Natural killer cell (primary cell): ENCODE measurements at regions of chr20 and their contacts with region 1.

Region 1: GRCh38 chr20:35771689-35772562 is at the start of gene PHF20:
- DNase-seq: peak; percentile 100
- ATAC-seq: peak; percentile 77 to 93 (median 80)
- H3K4me3 ChIP-seq: peak within 1 kb of the TSS; percentile 46
- H3K4me3 Mint-ChIP-seq: peak within 1 kb of the TSS; percentile 96
- H3K27ac ChIP-seq: peak within 1 kb of the TSS; percentile 99
- H3K27ac Mint-ChIP-seq: peak within 1 kb of the TSS; percentile 98 to 100
- H3K4me1 ChIP-seq: peaks cover 73% of the 10 kb centered on the region
- H3K4me1 Mint-ChIP-seq: peaks cover 65 to 70% of the 10 kb centered on the region in 2 donors
- H3K27me3 ChIP-seq: no peaks in the 10 kb centered on the region
- H3K27me3 Mint-ChIP-seq: no peaks in the 10 kb centered on the region
- CTCF ChIP-seq: no peak
- total RNA-seq, gene PHF20: 151 to 165 (median 161) TPM

Region 2: GRCh38 chr20:35664544-35665221 is 107.2 kb before region 1 on chr20 and contains the starts of genes CPNE1 and RBM12:
- intact Hi-C with region 1: loop called (anchors 1 kb)
- DNase-seq: peak; percentile 93 to 98
- ATAC-seq: peak; percentile 68 to 87 (median 80)
- H3K4me3 ChIP-seq: peak within 1 kb of the TSS; percentile 81
- H3K4me3 Mint-ChIP-seq: peak within 1 kb of the TSS; percentile 96
- H3K27ac ChIP-seq: peak within 1 kb of the TSS; percentile 97
- H3K27ac Mint-ChIP-seq: peak within 1 kb of the TSS in 1 of 2 donors; percentile 100
- H3K4me1 ChIP-seq: peaks cover 22% of the 10 kb centered on the region
- H3K4me1 Mint-ChIP-seq: peaks cover 55% of the 10 kb centered on the region in 2 donors
- H3K27me3 ChIP-seq: no peaks in the 10 kb centered on the region
- H3K27me3 Mint-ChIP-seq: no peaks in the 10 kb centered on the region
- CTCF ChIP-seq: no peak
- total RNA-seq, gene CPNE1: 298 to 342 (median 334) TPM
- total RNA-seq, gene RBM12: 80.9 to 112 (median 89.4) TPM

Region 3: GRCh38 chr20:35726759-35727711 is 44.9 kb before region 1 on chr20:
- intact Hi-C with region 1: loop called (anchors 10 kb)
- DNase-seq: no peak
- ATAC-seq: no peak
- H3K4me3 ChIP-seq: no peak overlapping the region
- H3K4me3 Mint-ChIP-seq: peak overlapping the region; percentile 17
- H3K27ac ChIP-seq: no peak overlapping the region
- H3K27ac Mint-ChIP-seq: peak overlapping the region; percentile 58 to 83
- H3K4me1 ChIP-seq: peaks cover 21% of the 10 kb centered on the region
- H3K4me1 Mint-ChIP-seq: peaks cover 43 to 46% of the 10 kb centered on the region in 2 donors
- H3K27me3 ChIP-seq: no peaks in the 10 kb centered on the region
- H3K27me3 Mint-ChIP-seq: no peaks in the 10 kb centered on the region
- CTCF ChIP-seq: no peak